CD8-positive, alpha-beta T cell (primary cell): ENCODE measurements at regions of chr19 and their contacts with region 1.

Region 1: DNA sequence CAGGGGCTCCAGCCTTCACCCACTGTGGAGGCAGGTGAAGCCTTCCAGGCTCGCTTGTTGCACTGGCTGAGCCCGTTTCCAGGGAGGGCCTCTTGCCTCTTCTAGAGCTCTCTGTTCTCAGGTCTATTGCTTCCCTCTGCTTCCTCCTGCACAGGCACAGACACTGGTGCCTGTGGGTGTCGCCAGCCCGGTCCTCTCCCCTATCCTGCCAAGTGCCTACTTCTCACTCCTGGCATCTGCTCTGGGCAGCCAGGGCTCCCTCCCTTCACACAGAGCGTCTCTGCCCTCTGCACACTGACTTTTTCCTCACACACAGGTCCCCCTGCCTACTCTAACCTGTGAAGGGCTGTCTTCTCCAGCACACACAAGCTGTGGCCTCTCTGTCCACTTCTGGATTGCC is 60.3 kb downstream of the SLC7A9 start:
- DNase-seq: no peak
- ATAC-seq: no peak
- H3K4me3 ChIP-seq: no peak overlapping the region
- H3K4me3 Mint-ChIP-seq: peak overlapping the region; percentile 48
- H3K27ac ChIP-seq: no peak overlapping the region
- H3K27ac Mint-ChIP-seq: no peak overlapping the region
- H3K4me1 ChIP-seq: peaks cover 11% of the 10 kb centered on the region
- H3K4me1 Mint-ChIP-seq: peaks cover 28% of the 10 kb centered on the region
- H3K27me3 ChIP-seq: no peaks in the 10 kb centered on the region
- H3K27me3 Mint-ChIP-seq: no peaks in the 10 kb centered on the region
- CTCF ChIP-seq: no peak

Region 2: DNA sequence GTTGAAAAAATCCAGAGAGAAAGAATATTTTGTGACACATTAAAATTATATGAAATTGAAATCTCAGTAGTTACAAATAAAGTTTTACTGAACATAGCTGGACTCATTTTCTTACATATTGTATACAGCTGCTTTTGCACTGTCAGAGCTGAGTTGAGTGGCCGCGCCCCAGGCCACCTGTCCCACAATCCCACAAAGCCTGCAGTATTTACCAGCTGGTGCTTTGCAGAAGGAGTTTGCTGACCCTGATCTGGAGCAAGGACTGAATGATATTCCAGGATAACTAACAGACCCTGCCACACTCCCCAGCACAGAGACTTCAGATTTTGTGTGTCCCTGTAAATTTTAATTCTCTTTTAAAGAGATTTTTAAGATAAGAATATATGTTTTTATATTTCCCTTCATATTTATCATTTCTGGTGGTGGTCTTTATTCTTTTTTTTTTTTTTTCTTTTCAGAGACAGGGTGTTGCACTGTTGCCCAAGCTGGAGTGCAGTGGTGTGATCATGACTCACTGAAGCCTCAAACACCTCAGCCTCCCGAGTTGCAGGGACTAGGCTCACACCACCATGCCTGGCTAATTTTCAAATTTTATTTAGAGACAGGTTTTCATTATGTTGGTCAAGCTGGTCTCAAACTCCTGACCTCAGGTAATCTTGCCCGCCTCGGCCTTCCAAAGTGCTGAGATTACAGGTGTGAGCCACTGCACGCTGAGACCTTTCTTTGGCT is 41.1 kb before region 1 on chr19:
- CTCF ChIA-PET with region 1: no interaction called
- POLR2A ChIA-PET with region 1: no interaction called
- intact Hi-C with region 1: loop called in 1 of 2 experiments (anchors 5 kb)
- DNase-seq: no peak
- ATAC-seq: no peak
- H3K4me3 ChIP-seq: no peak overlapping the region
- H3K4me3 Mint-ChIP-seq: no peak overlapping the region
- H3K27ac ChIP-seq: no peak overlapping the region
- H3K27ac Mint-ChIP-seq: no peak overlapping the region
- H3K4me1 ChIP-seq: no peaks in the 10 kb centered on the region
- H3K4me1 Mint-ChIP-seq: no peaks in the 10 kb centered on the region
- H3K27me3 ChIP-seq: no peaks in the 10 kb centered on the region
- H3K27me3 Mint-ChIP-seq: no peaks in the 10 kb centered on the region
- CTCF ChIP-seq: no peak